Endothelial cell of umbilical vein (primary cell): ENCODE measurements at regions of chr4 and their contacts with region 1.

Region 1: DNA sequence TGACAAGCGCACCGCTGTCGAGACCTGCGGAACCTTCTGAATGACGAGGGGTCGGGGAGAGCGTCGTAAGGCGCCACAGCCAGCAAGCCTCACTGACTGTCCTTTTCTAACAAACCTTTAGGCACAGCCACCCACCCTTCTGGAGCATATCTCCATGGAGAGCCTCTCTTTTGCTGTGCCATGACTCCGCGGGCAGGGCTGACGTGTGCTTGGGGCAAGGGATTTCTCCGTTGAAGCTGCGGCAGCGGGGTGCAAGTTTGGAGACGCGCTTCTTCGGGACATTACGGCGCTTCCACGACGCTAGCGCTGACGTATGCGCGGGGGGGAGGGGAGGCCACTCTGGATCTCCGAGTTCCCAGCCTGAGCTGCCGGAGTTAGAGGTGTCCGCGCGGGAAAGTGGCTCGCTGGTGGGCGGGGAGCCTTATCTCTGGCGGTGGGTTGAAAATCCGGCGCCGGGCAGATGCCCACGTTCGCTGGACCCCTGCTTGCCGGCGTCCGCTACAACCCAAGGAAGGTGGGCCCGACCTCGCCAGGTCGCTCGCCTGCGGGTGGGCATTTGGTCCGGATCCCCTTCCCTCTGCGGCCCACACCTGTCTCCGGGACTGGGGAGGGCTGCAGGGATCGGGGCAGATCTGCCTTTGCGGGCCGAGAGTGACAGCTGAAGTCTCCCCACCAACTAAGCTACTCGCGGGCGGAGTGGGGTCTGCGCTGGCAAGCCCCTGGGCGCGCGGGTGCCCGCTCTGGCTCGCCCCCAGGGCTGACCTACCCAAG is 543 bp upstream of the SLC10A7 start:
- DNase-seq: peak; percentile 85
- H3K4me3 ChIP-seq: peak overlapping the region; percentile 84 to 99 (median 90)
- H3K27ac ChIP-seq: peak overlapping the region; percentile 73
- H3K4me1 ChIP-seq: peaks cover 17% of the 10 kb centered on the region
- H3K27me3 ChIP-seq: no peaks in the 10 kb centered on the region
- CTCF ChIP-seq: no peak
- POLR2A ChIP-seq: peak; percentile 38

Region 2: DNA sequence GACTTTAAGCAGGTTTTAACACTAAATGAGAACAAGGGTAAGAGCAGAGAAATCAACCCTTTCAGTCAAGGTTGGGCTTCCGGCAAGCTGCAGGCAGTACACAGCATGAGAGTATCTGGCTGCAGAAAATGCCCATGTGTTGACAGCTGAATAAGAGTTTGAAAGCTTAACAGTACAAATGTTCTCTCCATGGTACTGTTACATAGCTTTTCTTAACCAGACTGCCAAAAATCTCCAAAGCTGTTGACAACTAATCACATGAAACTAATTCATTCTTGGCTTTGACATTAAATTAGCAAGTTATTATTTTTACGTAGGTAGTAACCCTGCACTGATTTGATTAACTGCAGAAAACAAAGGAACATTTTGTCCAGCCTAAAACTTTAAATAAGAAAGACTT is 154.1 kb before region 1 on chr4:
- CTCF ChIA-PET with region 1: no interaction called
- POLR2A ChIA-PET with region 1: no interaction called
- dilution Hi-C with region 1: no loop called
- intact Hi-C with region 1: loop called (anchors 1 kb)
- DNase-seq: peak; percentile 80
- H3K4me3 ChIP-seq: no peak overlapping the region
- H3K27ac ChIP-seq: peak overlapping the region; percentile 59
- H3K4me1 ChIP-seq: peaks cover 47% of the 10 kb centered on the region
- H3K27me3 ChIP-seq: no peaks in the 10 kb centered on the region
- CTCF ChIP-seq: no peak
- POLR2A ChIP-seq: no peak

Region 3: DNA sequence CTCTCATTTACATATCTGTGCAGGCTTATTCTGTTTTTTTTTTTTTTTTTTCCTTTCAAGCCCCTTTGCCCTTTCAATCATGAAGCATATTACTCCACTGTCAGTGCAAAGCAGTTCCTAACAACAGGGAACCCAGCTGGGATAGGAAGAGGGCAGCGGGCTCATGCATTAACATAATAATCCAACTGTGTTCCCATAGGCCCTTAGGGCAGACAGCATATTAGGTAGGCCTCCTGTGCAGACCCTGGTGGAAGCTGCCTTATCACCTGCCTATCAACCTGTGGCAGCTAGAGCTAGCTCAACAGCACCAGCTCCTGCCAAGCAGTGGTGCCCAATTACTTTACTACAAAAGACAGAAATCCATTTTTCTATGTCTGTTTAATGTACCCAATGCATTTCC is 49.9 kb before region 1 on chr4:
- CTCF ChIA-PET with region 1: no interaction called
- POLR2A ChIA-PET with region 1: no interaction called
- dilution Hi-C with region 1: no loop called
- intact Hi-C with region 1: loop called (anchors 1 kb)
- DNase-seq: no peak
- H3K4me3 ChIP-seq: no peak overlapping the region
- H3K27ac ChIP-seq: no peak overlapping the region
- H3K4me1 ChIP-seq: peaks cover 18% of the 10 kb centered on the region
- H3K27me3 ChIP-seq: no peaks in the 10 kb centered on the region
- CTCF ChIP-seq: no peak
- POLR2A ChIP-seq: no peak

Region 4: GRCh38 chr4:146488495-146489174 is 33.6 kb before region 1 on chr4:
- CTCF ChIA-PET with region 1: no interaction called
- POLR2A ChIA-PET with region 1: no interaction called
- dilution Hi-C with region 1: no loop called
- intact Hi-C with region 1: loop called (anchors 2 kb)
- DNase-seq: peak; percentile 83
- H3K4me3 ChIP-seq: no peak overlapping the region
- H3K27ac ChIP-seq: no peak overlapping the region
- H3K4me1 ChIP-seq: peaks cover 9% of the 10 kb centered on the region
- H3K27me3 ChIP-seq: no peaks in the 10 kb centered on the region
- CTCF ChIP-seq: no peak
- POLR2A ChIP-seq: no peak